GM10248 (cell line): ENCODE measurements at regions of chr17 and their contacts with region 1.

Region 1: GRCh38 chr17:78013683-78014467 is 55.4 kb downstream of the TNRC6C start:
- DNase-seq: peak; percentile 58
- CTCF ChIP-seq: peak; percentile 70

Region 2: DNA sequence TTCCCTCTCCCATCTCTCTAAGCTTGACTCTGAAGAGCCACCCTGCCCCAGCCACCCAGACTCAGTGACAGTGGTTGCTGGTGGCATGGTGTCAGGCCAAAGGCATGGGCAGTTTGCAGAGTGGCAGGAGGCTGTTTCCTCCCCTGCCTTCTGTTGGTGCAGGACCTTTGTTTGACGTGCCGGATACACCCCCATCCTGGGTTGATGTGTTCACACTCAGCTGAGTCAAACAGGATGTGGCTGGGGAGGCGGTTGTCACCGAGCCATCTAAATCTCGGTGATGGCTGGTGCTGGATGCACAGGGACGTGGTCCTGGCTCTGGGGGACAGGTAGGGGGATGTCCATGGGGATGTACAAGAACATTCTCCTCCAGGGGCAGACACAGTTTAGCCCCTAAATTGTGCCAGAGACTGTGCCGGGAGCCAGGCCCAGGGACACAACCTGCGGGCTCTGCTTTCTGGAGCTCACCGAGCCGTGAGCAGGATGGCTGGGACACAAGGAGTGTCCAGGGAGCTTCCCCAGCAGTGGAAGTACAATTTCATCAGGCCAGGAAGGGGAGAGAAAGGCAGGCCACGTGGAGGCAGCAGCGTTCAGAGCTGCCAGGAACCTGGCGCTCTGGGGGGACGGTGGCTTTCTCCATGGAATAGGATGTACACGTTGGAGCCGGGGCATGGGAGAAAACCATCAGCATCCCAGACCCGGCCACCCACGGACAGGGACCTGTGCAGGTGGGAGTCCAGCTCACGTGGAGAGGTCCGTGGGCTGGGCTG is 608.9 kb before region 1 on chr17:
- CTCF ChIA-PET with region 1: interaction called, 12 read pairs
- POLR2A ChIA-PET with region 1: no interaction called
- DNase-seq: peak; percentile 92
- CTCF ChIP-seq: no peak

Region 3: DNA sequence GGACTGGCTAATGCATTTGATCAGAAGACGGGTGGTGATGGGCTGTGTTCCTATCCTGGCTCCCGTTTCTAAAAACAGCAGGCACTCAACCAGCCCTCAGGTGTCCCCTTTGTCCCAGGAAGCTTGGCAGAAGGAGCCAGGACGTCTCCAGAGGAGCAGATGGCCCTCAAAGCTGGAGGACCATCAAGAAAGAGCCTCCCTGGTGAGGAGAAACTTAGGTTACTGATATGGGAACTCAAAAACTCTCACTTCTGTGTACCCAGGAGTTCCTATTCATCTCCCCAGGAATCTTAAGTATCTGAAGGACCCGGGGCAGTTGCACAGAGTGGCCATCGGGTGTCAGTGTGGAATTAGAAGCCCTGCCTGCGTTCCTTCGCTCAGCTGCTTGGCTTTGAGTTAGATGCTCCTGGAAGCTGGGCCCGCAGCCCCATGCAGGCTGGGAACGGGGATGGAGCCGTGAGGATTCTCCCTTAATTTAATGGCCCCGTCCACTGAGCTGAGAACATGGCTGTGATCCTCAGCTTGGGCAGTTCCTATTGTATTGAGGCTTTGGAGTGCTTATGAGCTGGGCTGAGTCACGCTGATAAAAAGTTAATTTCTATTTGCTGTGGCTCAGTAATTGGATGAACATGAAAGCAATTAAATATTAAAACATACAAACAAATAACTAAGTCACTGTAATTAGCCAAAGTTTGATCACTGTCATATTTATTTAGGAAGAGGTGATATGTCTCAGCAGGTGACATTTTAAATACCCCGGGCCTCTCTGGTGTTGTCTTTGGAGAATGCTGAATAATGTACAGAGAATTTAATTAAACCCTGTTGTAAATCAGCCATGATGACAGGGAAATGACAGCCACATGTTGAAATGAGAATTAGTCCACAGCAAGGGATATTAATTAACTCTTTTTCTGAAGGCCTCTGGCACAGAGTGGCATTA is 471.1 kb before region 1 on chr17:
- CTCF ChIA-PET with region 1: interaction called, 65 read pairs
- POLR2A ChIA-PET with region 1: no interaction called
- DNase-seq: peak; percentile 75
- CTCF ChIP-seq: peak; percentile 87

Region 4: GRCh38 chr17:77772461-77772897 is 241.4 kb before region 1 on chr17:
- CTCF ChIA-PET with region 1: interaction called, 43 read pairs
- POLR2A ChIA-PET with region 1: no interaction called
- DNase-seq: peak; percentile 86
- CTCF ChIP-seq: peak; percentile 79

Region 5: GRCh38 chr17:77914385-77915254 is 99.3 kb before region 1 on chr17:
- CTCF ChIA-PET with region 1: interaction called, 11 read pairs
- POLR2A ChIA-PET with region 1: no interaction called
- DNase-seq: no peak
- CTCF ChIP-seq: no peak

Region 6: DNA sequence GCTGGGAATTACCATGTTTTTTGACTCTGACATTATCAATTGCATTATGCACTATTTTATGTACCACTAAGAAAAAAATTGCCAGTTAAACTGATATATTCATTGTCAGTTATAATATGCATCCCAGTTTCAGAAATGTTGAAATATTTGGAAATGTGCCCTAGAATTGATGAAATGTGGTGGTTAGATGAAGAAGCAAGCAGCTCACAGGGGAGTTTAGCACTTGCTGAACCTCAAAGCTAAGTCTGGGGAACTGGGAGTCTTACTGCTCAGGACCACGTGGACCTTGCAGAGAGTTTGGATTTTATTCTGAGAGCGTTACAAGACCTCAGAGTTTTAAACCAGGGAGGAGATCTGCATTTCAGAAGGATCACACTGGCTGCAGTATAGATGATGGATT is 12.5 kb after region 1 on chr17:
- CTCF ChIA-PET with region 1: interaction called, 40 read pairs
- POLR2A ChIA-PET with region 1: no interaction called
- DNase-seq: no peak
- CTCF ChIP-seq: no peak

Region 7: GRCh38 chr17:78032166-78032565 is 18.3 kb after region 1 on chr17:
- CTCF ChIA-PET with region 1: interaction called, 40 read pairs
- POLR2A ChIA-PET with region 1: no interaction called
- DNase-seq: no peak
- CTCF ChIP-seq: no peak